ENCODE measurements at regions of chr9 and their contacts with region 1.

Region 1: GRCh38 chr9:35882263-35882848 is 12.2 kb upstream of the OR13J1 start:
- DNase-seq: peak; percentile 86 to 92
- ATAC-seq: peak; percentile 79 to 97 (median 86)
- H3K4me3 ChIP-seq: no peak overlapping the region
- H3K27ac ChIP-seq: no peak overlapping the region
- H3K4me1 ChIP-seq: no peaks in the 10 kb centered on the region
- H3K27me3 ChIP-seq: no peaks in the 10 kb centered on the region
- CTCF ChIP-seq: peak; percentile 97

Region 2: DNA sequence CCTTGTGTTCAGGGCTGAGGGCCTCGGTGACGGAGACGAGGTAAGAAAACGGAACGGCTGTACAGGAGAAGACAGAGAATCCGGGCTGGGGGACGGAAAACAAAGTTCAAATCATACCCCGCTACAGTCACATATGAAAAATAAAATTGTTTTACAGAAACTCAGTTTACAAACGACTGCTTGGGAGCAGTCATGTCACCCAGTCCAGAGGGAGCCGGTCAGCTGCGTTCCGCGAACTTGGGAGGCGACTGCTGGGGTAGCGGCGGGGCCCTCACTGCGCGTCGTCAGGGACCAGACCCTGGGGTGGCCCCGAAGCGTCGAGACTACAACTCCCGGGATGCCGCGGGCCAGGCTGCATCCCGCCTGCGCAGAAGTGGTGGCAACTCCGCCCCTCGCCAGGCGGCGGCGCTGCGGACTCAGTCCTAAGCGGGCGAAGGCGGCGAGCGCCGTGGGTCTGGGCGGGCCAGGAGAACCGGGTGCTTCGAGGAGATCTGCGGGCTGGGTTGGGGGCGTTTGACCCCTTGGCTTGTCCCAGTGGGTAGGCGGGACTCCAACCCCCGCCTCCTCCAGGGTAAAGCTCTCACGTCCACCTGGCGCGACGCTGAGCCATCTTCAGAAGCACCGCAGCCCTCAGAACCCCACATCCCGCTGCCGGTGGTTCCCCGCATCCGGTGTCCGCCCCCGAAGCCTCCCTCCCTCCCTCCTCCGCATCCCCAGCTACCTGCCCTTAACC is 235.7 kb before region 1 on chr9:
- intact Hi-C with region 1: loop called in 1 of 2 experiments (anchors 5 kb)
- DNase-seq: peak; percentile 93 to 96
- ATAC-seq: peak; percentile 96 to 100 (median 97)
- H3K4me3 ChIP-seq: peak overlapping the region; percentile 85
- H3K27ac ChIP-seq: peak overlapping the region; percentile 92
- H3K4me1 ChIP-seq: no peaks in the 10 kb centered on the region
- H3K27me3 ChIP-seq: no peaks in the 10 kb centered on the region
- CTCF ChIP-seq: peak; percentile 95

Region 3: DNA sequence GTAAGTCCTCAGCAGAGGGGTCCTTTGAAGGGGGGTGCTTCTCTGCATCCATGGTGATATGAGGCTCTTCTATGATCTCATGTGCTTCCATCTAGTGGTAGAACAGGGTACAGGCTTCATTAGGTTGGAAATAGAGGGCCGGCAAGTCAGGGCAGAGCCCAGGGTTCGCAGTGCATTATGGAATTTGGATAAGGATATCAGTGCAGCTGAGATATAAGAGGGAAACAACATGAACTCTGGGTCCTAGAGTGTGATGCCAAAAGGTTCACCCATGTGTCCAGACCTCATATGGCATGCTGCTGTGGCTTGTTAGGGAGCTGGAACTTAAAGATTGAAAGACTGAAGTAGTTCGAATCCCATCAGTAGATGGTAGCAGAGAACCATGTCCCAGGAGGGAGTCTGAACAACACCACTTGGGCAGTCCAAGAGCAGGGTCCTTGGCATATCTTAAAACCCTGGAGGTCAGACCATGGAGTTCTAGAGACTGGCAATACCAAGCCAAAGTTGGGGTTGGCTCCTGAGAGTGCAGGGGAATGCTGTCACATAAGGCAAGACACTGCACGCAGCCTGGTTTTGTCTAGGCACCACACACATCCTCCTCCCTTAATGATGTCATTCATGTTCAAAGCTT is 56.2 kb before region 1 on chr9:
- intact Hi-C with region 1: loop called (anchors 2 kb)
- DNase-seq: no peak
- ATAC-seq: peak; percentile 43 to 69 (median 56)
- H3K4me3 ChIP-seq: no peak overlapping the region
- H3K27ac ChIP-seq: no peak overlapping the region
- H3K4me1 ChIP-seq: peaks cover 19% of the 10 kb centered on the region
- H3K27me3 ChIP-seq: no peaks in the 10 kb centered on the region
- CTCF ChIP-seq: peak; percentile 76